H1 (cell line): ENCODE measurements at regions of chr4 and their contacts with region 1.

Region 1: DNA sequence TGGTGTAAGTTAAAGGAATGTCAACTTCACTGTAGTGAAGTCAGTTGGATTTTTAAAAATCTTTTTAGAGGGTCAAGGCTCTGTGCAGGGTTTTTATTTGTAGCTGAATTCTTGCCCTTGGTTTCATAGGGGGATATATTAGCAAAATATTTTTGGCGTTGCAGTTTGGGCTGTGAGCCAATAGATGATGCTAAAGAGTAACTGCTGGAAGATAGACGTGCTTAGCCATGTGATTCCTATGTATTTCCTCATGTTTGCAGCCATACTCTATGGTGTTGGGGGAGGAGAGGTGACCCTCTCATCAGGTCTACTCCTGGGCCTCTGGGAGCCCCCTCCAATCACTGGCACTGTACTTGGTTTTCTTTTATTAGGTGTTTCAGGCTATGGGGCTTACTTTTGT is 246.7 kb upstream of the ARHGAP24 start:
- DNase-seq: no peak
- H3K4me3 ChIP-seq: no peak overlapping the region
- H3K27ac ChIP-seq: no peak overlapping the region
- H3K4me1 ChIP-seq: no peaks in the 10 kb centered on the region
- H3K27me3 ChIP-seq: no peaks in the 10 kb centered on the region
- CTCF ChIP-seq: peak in 2 of 3 experiments; percentile 28 to 57; a peak in 3 of 4 replicates
- EP300 ChIP-seq: no peak
- POLR2A ChIP-seq: no peak
- RAD21 ChIP-seq: peak; percentile 61 to 66

Region 2: GRCh38 chr4:85243857-85244256 is 15.6 kb after region 1 on chr4:
- CTCF ChIA-PET with region 1: interaction called, 17 read pairs
- POLR2A ChIA-PET with region 1: no interaction called
- DNase-seq: no peak
- H3K4me3 ChIP-seq: no peak overlapping the region
- H3K27ac ChIP-seq: no peak overlapping the region
- H3K4me1 ChIP-seq: no peaks in the 10 kb centered on the region
- H3K27me3 ChIP-seq: no peaks in the 10 kb centered on the region
- CTCF ChIP-seq: peak in 2 of 3 experiments; percentile 33 to 56; a peak in 2 of 4 replicates
- EP300 ChIP-seq: no peak
- POLR2A ChIP-seq: no peak
- RAD21 ChIP-seq: peak; percentile 47 to 57; a peak in 3 of 4 replicates

Region 3: DNA sequence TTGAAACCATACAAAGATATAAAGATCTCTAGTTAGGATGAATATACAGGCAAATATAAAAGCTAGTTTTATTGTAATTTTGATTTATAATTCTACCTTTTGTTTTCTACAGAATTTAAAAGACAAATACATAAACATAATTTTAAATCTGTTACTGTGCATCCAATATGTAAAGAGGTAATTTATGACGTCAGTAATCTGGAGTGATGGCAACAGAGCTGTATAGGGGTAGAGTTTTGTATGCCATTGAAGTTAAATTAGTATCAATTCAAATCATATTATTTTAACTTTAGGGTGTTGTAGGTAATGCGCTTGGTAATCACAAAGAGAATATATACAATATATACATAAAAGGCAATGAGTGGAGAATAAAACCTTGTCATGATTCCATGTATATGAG is 63.0 kb after region 1 on chr4:
- CTCF ChIA-PET with region 1: no interaction called
- POLR2A ChIA-PET with region 1: no interaction called
- DNase-seq: no peak
- H3K4me3 ChIP-seq: no peak overlapping the region
- H3K27ac ChIP-seq: no peak overlapping the region
- H3K4me1 ChIP-seq: no peaks in the 10 kb centered on the region
- H3K27me3 ChIP-seq: no peaks in the 10 kb centered on the region
- CTCF ChIP-seq: no peak
- EP300 ChIP-seq: no peak
- POLR2A ChIP-seq: no peak
- RAD21 ChIP-seq: no peak